Calu3 (cell line): ENCODE measurements at regions of chr5 and their contacts with region 1.

Region 1: DNA sequence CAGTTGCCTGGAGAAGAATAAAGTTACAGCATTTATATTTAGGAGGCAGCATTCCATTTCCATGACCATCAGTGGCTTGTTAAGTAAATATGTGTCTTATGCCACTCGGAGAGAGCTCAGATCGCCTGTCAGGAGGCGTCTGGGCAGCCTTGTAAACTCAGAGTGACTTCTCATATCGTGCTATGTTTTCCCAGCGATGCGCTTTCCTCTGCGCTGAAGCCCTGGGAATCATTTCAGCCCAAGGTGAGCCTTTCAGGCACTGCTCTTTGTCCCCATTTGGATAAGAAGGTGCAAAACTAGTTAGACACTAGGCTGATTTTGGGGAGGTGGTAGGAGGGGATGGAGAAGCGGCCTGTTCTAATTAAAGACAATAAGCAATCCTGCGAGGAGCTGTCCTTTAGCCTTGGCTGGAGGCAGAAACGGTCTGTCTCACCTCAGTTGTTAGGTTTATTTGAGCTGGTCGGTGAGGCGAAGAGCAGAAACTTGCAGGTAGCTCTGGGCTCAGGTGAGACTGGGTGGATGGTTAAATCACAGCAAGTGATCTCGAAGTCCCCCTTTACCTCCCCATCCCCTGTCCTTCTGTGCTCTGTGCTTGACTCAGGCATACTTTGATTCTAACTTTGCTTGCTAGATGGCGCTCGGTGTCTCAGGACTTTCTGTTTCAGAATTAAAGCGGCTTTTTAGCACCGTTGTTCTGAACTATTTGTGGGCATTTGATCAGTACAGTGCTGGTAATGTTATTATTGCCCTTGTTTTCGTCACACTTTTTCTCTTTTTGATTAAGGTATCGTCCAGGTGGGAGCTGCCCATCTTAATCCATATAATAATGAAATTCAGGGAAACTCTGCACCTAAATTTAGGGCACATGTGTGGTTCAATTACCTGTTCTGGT is 24.6 kb downstream of the NR2F1 start:
- DNase-seq: peak; percentile 44
- H3K4me3 Mint-ChIP-seq: no peak overlapping the region
- H3K27ac Mint-ChIP-seq: no peak overlapping the region
- H3K4me1 Mint-ChIP-seq: peaks cover 26% of the 10 kb centered on the region
- H3K27me3 Mint-ChIP-seq: peaks cover 47% of the 10 kb centered on the region
- CTCF ChIP-seq: peak; percentile 64

Region 2: DNA sequence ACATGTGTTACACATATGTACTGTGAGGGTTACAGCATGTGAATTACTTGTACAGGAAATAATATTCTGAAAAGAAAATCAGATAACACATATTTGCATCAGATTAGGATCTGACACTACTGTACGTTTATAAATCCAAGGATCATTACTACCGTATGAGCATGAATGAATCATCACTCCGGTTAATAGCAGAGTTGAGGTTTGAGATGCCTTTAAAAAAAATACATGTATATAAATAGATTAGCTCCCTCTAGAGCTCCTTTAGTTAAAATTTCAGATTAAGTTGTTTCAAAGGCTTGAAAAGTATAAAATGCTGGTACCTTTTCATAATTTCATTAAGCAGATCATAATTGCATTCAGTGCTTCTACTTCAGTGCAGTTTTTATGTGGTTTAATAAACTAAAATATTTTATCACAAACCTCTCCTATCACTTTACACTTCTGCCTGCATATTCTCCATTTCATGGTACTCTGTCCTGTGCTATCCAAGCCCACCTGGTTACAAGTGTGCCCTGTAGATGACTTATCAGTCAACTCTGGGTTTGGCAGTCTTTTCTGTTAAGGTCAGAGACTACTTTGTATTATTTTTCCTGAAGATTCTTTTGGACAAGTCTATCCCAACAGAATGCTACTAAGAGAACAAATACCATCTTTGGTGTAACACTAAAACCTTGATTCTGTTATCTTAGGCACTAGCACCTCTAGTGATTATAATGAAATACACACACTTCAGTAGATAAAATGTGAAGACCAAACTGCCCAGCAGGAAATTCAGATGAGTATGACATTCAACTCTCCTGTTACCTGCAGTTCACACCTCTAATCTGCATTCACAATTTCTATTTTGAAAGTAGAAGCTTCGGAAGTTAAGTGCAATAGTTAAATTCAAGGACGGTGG is 181.8 kb after region 1 on chr5:
- CTCF ChIA-PET with region 1: interaction called, 5 read pairs
- intact Hi-C with region 1: loop called (anchors 5 kb)
- DNase-seq: no peak
- H3K4me3 Mint-ChIP-seq: no peak overlapping the region
- H3K27ac Mint-ChIP-seq: no peak overlapping the region
- H3K4me1 Mint-ChIP-seq: peaks cover 9% of the 10 kb centered on the region
- H3K27me3 Mint-ChIP-seq: no peaks in the 10 kb centered on the region
- CTCF ChIP-seq: no peak

Region 3: DNA sequence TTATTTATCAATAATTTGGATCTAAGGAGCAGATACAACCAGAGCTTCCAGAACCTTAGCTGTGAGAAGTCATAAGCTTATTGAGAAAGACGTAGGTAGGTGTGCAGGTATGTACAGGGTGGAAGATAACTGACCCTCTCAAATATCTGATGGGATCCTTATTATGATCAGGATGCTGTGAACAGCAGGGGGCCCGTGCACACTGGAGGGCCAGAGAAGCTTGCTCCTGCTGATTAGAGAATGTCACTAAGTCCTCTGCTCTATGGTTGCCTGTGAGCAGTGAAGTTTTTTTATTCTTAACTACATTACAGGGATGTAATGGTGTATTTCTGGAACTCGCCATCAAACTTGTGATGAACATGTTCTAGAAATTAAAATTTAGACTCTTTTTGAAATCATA is 242.7 kb after region 1 on chr5:
- CTCF ChIA-PET with region 1: no interaction called
- intact Hi-C with region 1: no loop called
- DNase-seq: no peak
- H3K4me3 Mint-ChIP-seq: no peak overlapping the region
- H3K27ac Mint-ChIP-seq: no peak overlapping the region
- H3K4me1 Mint-ChIP-seq: peaks cover 6% of the 10 kb centered on the region
- H3K27me3 Mint-ChIP-seq: no peaks in the 10 kb centered on the region
- CTCF ChIP-seq: no peak

Region 4: DNA sequence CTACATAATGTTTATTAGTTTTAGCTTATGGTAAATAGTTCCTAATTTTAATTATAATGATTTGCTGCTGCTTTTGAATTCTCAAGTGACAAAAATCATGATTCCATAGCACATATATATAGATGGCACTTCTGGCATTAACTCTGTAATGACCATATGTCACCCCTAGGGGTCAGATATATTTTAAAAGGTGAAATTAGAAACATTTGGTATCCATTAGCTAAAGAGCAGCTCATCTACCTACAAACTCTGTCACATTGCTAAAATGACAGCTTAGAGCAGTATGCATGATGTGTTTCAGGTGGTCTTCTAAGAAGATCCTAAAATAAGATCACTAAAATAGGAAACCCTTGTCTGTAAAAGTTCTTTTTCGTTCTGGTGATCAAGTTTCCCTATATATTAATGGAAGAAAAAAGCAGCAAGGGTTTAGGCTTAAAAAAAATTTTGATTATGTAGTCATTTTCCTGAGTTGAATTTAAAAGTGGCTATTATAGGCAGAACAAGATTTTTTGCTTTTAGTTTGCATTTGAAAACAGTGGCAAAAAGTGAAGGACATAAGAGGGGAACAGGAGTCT is 291.5 kb after region 1 on chr5:
- CTCF ChIA-PET with region 1: interaction called, 3 read pairs
- intact Hi-C with region 1: loop called (anchors 10 kb)
- DNase-seq: no peak
- H3K4me3 Mint-ChIP-seq: no peak overlapping the region
- H3K27ac Mint-ChIP-seq: no peak overlapping the region
- H3K4me1 Mint-ChIP-seq: no peaks in the 10 kb centered on the region
- H3K27me3 Mint-ChIP-seq: no peaks in the 10 kb centered on the region
- CTCF ChIP-seq: peak; percentile 50